Right lobe of liver (tissue), 6 donors: ENCODE measurements at regions of chr19 and their contacts with region 1.

Region 1: DNA sequence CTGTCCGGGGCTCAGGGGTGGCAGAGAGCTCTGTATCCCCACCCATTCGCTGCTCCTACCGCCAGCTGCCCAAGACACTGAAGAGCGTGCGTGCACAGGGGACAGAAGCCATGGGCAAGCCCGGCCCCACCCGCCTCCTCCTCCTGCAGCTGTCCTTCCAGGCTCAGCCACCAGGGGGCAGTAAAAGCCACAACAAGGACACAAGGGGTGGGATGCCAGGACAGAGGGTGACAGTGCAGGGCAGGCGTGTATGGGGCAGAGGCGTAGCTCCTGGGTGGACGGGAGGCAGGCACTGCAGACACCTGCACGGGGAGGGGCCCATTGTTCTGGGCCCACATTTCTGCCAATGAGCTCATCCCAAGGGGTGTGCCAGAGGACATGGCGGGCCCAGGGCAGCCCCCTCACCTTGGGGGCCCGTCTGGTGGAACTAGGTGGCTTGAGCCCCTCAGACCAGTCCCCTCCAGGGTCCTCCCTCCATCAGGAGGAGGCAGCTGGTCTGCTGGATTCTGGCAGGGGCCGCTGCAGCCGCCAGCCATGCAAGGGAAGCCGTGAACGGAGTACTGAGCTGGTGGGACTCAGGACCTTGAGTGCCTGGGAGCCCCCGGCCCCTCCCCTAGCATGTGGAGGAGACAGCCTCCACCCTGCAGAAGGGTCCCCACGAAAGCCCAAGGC is 61.1 kb downstream of the MLLT1 start:
- DNase-seq: peak; percentile 90
- ATAC-seq: peak; percentile 77 to 89 (median 80)
- H3K4me3 ChIP-seq: no peak overlapping the region
- H3K27ac ChIP-seq: no peak overlapping the region
- H3K4me1 ChIP-seq: peaks cover 0 to 18% (median 4%) of the 10 kb centered on the region in 4 donors
- H3K27me3 ChIP-seq: no peaks in the 10 kb centered on the region
- CTCF ChIP-seq: peak; percentile 95 to 99 (median 97)
- POLR2A ChIP-seq: no peak

Region 2: DNA sequence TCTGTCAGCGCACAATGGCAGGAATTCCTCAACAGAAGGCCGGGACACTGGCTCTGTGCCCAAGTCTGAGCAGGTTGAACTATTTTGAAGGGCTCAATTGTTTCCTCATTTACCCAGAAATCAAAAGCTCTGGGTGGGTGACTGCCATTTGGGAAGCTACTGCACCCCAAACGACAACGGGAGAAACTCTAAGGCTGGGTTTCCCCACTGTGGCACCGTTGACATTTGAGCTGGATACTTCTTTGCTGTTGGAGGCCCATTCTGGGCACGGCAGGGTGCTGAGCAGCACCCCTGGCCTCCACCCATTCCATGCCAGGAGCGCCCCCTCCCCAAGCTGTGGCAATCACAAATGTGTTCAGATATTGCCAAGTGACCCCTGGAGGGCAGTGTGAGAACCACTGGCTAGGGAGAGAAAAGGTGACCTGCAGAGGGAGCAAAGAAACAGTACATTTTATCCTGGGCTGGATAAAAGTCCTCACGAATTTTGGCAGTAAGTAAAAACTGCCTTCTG is 170.8 kb before region 1 on chr19:
- intact Hi-C with region 1: no loop called
- DNase-seq: peak in 1 of 3 donors; percentile 51
- ATAC-seq: peak; percentile 76 to 85 (median 82)
- H3K4me3 ChIP-seq: no peak overlapping the region
- H3K27ac ChIP-seq: no peak overlapping the region
- H3K4me1 ChIP-seq: peaks cover 0 to 7% (median 3%) of the 10 kb centered on the region in 4 donors
- H3K27me3 ChIP-seq: no peaks in the 10 kb centered on the region
- CTCF ChIP-seq: peak; percentile 71 to 78 (median 76)
- POLR2A ChIP-seq: no peak

Region 3: DNA sequence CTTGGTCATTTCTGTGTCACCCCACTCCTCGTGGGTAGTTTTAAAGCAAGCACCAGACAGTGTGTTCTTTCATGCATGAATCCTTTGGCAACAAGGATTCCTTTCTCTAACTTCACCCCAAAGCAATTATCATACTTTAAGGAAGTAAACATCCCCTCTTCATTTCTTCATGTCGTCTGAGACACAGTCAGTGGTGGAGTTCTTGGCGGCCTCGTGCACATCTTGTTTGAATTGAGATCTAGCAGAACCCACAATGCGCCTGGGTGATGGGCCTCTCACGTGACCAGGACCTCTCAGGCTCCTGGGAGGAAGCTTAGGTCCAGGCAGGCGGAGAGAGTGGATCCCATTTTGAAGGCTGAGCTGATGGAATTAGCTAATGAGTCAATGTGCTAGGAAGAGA is 80.6 kb before region 1 on chr19:
- intact Hi-C with region 1: no loop called
- DNase-seq: no peak
- ATAC-seq: no peak
- H3K4me3 ChIP-seq: no peak overlapping the region
- H3K27ac ChIP-seq: no peak overlapping the region
- H3K4me1 ChIP-seq: no peaks in the 10 kb centered on the region
- H3K27me3 ChIP-seq: no peaks in the 10 kb centered on the region
- CTCF ChIP-seq: no peak
- POLR2A ChIP-seq: no peak

Region 4: GRCh38 chr19:6260912-6261650 is 42.5 kb after region 1 on chr19:
- intact Hi-C with region 1: loop called in 1 of 2 experiments (anchors 10 kb)
- DNase-seq: peak in 1 of 3 donors; percentile 24
- ATAC-seq: peak; percentile 26 to 33 (median 32)
- H3K4me3 ChIP-seq: no peak overlapping the region
- H3K27ac ChIP-seq: no peak overlapping the region
- H3K4me1 ChIP-seq: peaks cover 0 to 22% (median 11%) of the 10 kb centered on the region in 4 donors
- H3K27me3 ChIP-seq: no peaks in the 10 kb centered on the region
- CTCF ChIP-seq: peak; percentile 33 to 47 (median 39)
- POLR2A ChIP-seq: no peak

Region 5: GRCh38 chr19:6297202-6297601 is 78.6 kb after region 1 on chr19:
- intact Hi-C with region 1: loop called (anchors 5 kb)
- DNase-seq: no peak
- ATAC-seq: peak in 1 of 4 donors; percentile 17
- H3K4me3 ChIP-seq: no peak overlapping the region
- H3K27ac ChIP-seq: no peak overlapping the region
- H3K4me1 ChIP-seq: no peaks in the 10 kb centered on the region
- H3K27me3 ChIP-seq: no peaks in the 10 kb centered on the region
- CTCF ChIP-seq: no peak
- POLR2A ChIP-seq: no peak